Activated CD4-positive, alpha-beta T cell treated with anti-CD3 and anti-CD28 coated beads for 36 hours (primary cell): ENCODE measurements at regions of chr6 and their contacts with region 1.

Region 1: GRCh38 chr6:18488526-18489270 is 101.5 kb downstream of the RNF144B start:
- DNase-seq: no peak
- ATAC-seq: no peak
- H3K4me3 Mint-ChIP-seq: no peak overlapping the region
- H3K27ac Mint-ChIP-seq: no peak overlapping the region
- H3K4me1 Mint-ChIP-seq: peaks cover 16% of the 10 kb centered on the region
- H3K27me3 Mint-ChIP-seq: peaks cover 27% of the 10 kb centered on the region

Region 2: DNA sequence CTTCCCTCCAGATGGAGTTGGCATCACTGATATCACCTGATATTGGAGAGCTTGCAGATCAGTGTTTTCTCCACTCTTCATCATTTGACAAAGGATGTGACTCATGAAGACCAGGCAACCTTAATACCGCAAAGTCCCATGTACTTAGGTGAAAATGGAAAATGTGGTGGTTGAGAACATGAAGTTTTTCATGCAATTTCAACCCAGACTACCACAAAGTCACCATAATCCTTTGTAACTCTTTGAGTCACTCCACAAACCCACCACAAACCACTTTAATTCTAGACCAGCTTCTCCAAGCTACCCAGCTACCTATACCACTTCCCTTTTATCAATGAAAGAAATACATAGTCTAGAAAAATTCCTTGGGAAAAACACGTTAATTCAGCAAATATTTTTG is 373.3 kb before region 1 on chr6:
- CTCF ChIA-PET with region 1: no interaction called
- POLR2A ChIA-PET with region 1: no interaction called
- intact Hi-C with region 1: loop called in 1 of 2 experiments (anchors 5 kb)
- DNase-seq: peak; percentile 8
- ATAC-seq: peak; percentile 87
- H3K4me3 Mint-ChIP-seq: no peak overlapping the region
- H3K27ac Mint-ChIP-seq: no peak overlapping the region
- H3K4me1 Mint-ChIP-seq: peaks cover 12% of the 10 kb centered on the region
- H3K27me3 Mint-ChIP-seq: peaks cover 51% of the 10 kb centered on the region

Region 3: GRCh38 chr6:18234564-18234963 is 254.1 kb before region 1 on chr6:
- CTCF ChIA-PET with region 1: no interaction called
- POLR2A ChIA-PET with region 1: no interaction called
- intact Hi-C with region 1: no loop called
- DNase-seq: no peak
- ATAC-seq: no peak
- H3K4me3 Mint-ChIP-seq: no peak overlapping the region
- H3K27ac Mint-ChIP-seq: no peak overlapping the region
- H3K4me1 Mint-ChIP-seq: peaks cover 2% of the 10 kb centered on the region
- H3K27me3 Mint-ChIP-seq: no peaks in the 10 kb centered on the region

Region 4: GRCh38 chr6:18400831-18401446 is 87.8 kb before region 1 on chr6:
- CTCF ChIA-PET with region 1: no interaction called
- POLR2A ChIA-PET with region 1: no interaction called
- intact Hi-C with region 1: loop called in 1 of 2 experiments (anchors 5 kb)
- DNase-seq: no peak
- ATAC-seq: peak; percentile 68
- H3K4me3 Mint-ChIP-seq: no peak overlapping the region
- H3K27ac Mint-ChIP-seq: peak overlapping the region; percentile 82
- H3K4me1 Mint-ChIP-seq: peaks cover 23% of the 10 kb centered on the region
- H3K27me3 Mint-ChIP-seq: no peaks in the 10 kb centered on the region

Region 5: GRCh38 chr6:18439581-18439980 is 49.1 kb before region 1 on chr6:
- CTCF ChIA-PET with region 1: no interaction called
- POLR2A ChIA-PET with region 1: no interaction called
- intact Hi-C with region 1: loop called in 1 of 2 experiments (anchors 5 kb)
- DNase-seq: no peak
- ATAC-seq: peak; percentile 90
- H3K4me3 Mint-ChIP-seq: no peak overlapping the region
- H3K27ac Mint-ChIP-seq: no peak overlapping the region
- H3K4me1 Mint-ChIP-seq: peaks cover 8% of the 10 kb centered on the region
- H3K27me3 Mint-ChIP-seq: no peaks in the 10 kb centered on the region